OCI-LY7 (cell line): ENCODE measurements at regions of chr5 and their contacts with region 1.

Region 1: GRCh38 chr5:170420780-170421412 is 31.7 kb upstream of the KCNMB1 start:
- DNase-seq: peak; percentile 59
- H3K4me3 ChIP-seq: no peak overlapping the region
- H3K27ac ChIP-seq: no peak overlapping the region
- H3K4me1 ChIP-seq: no peaks in the 10 kb centered on the region
- CTCF ChIP-seq: peak; percentile 87

Region 2: GRCh38 chr5:170100066-170100943 is 320.6 kb before region 1 on chr5:
- CTCF ChIA-PET with region 1: no interaction called
- POLR2A ChIA-PET with region 1: interaction called, 4 read pairs
- intact Hi-C with region 1: loop called (anchors 2 kb)
- DNase-seq: peak; percentile 72
- H3K4me3 ChIP-seq: no peak overlapping the region
- H3K27ac ChIP-seq: no peak overlapping the region
- H3K4me1 ChIP-seq: no peaks in the 10 kb centered on the region
- CTCF ChIP-seq: peak; percentile 86

Region 3: GRCh38 chr5:170225326-170226128 is 195.4 kb before region 1 on chr5:
- CTCF ChIA-PET with region 1: no interaction called
- POLR2A ChIA-PET with region 1: no interaction called
- intact Hi-C with region 1: loop called (anchors 1 kb)
- DNase-seq: peak; percentile 56
- H3K4me3 ChIP-seq: no peak overlapping the region
- H3K27ac ChIP-seq: no peak overlapping the region
- H3K4me1 ChIP-seq: no peaks in the 10 kb centered on the region
- CTCF ChIP-seq: peak; percentile 93

Region 4: GRCh38 chr5:170267431-170268152 is 153.3 kb before region 1 on chr5:
- CTCF ChIA-PET with region 1: no interaction called
- POLR2A ChIA-PET with region 1: interaction called, 3 read pairs
- intact Hi-C with region 1: loop called (anchors 2 kb)
- DNase-seq: peak; percentile 74
- H3K4me3 ChIP-seq: no peak overlapping the region
- H3K27ac ChIP-seq: no peak overlapping the region
- H3K4me1 ChIP-seq: peaks cover 6% of the 10 kb centered on the region
- CTCF ChIP-seq: peak; percentile 95